ENCODE measurements at regions of chr13 and their contacts with region 1.

Region 1: DNA sequence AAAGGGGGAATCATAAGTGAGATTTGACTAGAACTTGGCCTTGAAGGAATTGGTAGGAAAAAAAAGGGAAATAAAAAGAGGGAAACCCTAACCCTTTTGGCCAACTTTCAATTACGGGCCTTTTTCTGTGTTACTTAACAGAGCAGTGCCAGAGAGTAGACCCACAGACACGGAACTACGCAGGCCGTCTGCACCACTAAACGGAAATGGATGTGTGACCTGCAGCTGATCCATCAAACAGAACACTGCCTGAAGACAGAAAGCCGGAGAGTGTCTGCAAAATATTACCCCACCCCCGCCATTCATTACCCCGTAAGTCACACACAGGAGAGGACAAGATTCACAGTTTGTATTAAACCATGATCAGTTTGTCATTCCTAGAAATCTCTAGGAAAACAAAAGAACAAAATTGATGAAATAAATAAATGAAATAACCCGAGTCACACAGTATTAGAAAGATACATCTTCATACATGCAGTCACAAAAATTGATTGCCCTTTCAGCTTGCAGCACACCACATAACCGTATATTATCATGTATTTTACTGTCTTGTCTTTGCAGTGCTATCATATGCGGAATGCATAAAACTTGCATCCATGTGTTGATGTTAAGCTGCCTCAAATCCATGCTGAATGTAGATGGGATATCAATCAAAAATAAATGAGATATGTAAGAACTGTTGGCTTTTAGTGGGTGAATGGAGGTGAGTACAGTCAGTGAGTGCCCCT is 424.7 kb downstream of the IRS2 start:
- DNase-seq: no peak
- H3K4me3 ChIP-seq: no peak overlapping the region
- H3K27ac ChIP-seq: no peak overlapping the region
- H3K4me1 ChIP-seq: peaks cover 10% of the 10 kb centered on the region
- H3K27me3 ChIP-seq: no peaks in the 10 kb centered on the region
- CTCF ChIP-seq: no peak

Region 2: DNA sequence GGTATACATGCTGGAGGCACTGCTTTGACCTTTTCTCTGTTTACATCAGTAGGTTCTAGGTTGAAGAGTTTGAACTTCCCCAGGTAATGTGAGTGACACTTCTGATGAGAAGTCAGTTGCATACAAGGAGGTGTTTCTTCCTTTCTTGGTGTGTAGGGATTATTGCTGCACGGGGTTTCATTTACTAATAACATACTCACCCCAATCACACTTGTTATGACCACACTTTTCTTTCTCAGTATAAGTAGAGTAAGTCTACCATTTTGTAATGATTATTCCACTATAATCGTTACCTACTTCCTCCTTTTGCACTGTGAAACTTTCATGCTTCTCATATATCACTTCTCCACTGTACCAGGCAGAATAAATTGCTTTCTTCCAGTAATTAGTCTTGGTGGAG is 954.2 kb before region 1 on chr13:
- CTCF ChIA-PET with region 1: no interaction called
- POLR2A ChIA-PET with region 1: no interaction called
- intact Hi-C with region 1: no loop called
- DNase-seq: no peak
- H3K4me3 ChIP-seq: no peak overlapping the region
- H3K27ac ChIP-seq: no peak overlapping the region
- H3K4me1 ChIP-seq: peaks cover 7% of the 10 kb centered on the region
- H3K27me3 ChIP-seq: no peaks in the 10 kb centered on the region
- CTCF ChIP-seq: no peak

Region 3: DNA sequence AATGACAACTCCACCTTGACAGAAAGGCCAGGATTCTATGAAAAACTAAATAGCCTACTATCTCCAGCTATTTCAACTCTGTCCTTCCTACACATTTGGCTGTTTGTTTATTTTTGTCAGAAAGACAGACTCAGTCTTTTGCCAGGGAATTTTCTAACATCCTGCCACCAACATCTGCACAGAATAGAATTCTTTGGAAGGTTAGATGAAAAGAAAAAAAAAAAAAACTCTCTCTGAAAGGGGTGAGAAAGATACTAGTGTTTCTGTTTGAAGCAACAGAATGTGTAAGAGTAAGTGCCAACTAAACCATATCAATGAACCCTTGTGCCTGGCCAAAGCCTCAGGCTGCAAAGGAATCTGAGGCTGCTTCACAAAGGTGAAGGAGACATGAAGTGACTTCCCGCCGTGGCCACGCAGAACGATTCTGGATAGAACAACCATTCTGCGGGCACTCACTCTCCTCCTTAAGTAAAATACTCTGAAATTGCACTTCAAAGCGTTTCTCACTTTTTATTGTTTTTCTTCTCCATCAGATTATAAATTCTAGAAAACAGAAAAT is 73.5 kb before region 1 on chr13:
- CTCF ChIA-PET with region 1: no interaction called
- POLR2A ChIA-PET with region 1: interaction called, 17 read pairs
- intact Hi-C with region 1: no loop called
- DNase-seq: no peak
- H3K4me3 ChIP-seq: no peak overlapping the region
- H3K27ac ChIP-seq: no peak overlapping the region
- H3K4me1 ChIP-seq: no peaks in the 10 kb centered on the region
- H3K27me3 ChIP-seq: no peaks in the 10 kb centered on the region
- CTCF ChIP-seq: no peak

Region 4: GRCh38 chr13:110023729-110024644 is 662.3 kb after region 1 on chr13:
- CTCF ChIA-PET with region 1: interaction called, 14 read pairs
- POLR2A ChIA-PET with region 1: no interaction called
- intact Hi-C with region 1: no loop called
- DNase-seq: no peak
- H3K4me3 ChIP-seq: no peak overlapping the region
- H3K27ac ChIP-seq: no peak overlapping the region
- H3K4me1 ChIP-seq: no peaks in the 10 kb centered on the region
- H3K27me3 ChIP-seq: peaks cover 95% of the 10 kb centered on the region
- CTCF ChIP-seq: no peak

Measured in A673 (cell line).